Endothelial cell of umbilical vein (primary cell): ENCODE measurements at regions of chr7 and their contacts with region 1.

Region 1: DNA sequence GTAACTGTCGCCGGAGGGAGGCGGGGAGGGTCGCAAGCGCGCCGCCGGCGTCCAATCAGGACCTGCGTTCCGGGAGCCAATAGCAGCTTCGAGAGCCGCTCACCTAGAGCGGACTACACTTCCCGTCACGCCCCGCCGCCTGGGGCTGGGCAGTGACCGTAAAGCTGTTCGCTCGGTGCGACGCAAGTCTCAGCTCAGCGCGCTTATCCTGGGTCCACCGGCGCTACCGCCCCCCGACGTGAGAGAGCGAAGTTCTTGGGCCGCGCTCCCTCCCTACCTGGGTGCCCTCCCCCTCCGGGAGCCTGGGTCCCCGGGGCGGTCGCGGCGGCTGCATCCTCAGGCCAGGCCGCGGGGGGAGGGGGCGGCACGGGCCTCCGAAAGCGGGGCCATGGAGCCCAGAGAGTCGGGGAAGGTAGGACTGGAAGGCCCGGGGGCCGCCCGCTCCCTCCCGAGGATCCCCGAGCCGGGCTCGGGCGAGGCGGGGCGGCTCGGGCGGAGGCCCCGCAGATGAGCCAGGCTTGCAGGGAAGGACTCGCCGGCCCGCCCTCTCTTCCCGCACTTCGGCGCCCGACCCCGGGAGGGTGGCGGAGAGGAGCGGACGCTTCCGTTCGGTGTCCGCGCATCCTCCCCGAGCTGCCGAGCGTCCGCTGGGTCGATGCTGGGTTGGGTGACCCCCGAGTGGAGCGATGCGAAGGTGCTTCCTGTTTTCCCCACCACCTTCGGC is at the start of gene ZNF862:
- DNase-seq: peak; percentile 98
- H3K4me3 ChIP-seq: peak within 1 kb of the TSS; percentile 2 to 83 (median 48)
- H3K27ac ChIP-seq: no peak within 1 kb of the TSS
- H3K4me1 ChIP-seq: no peaks in the 10 kb centered on the region
- H3K27me3 ChIP-seq: no peaks in the 10 kb centered on the region
- CTCF ChIP-seq: no peak
- POLR2A ChIP-seq: peak; percentile 51
- total RNA-seq, gene ZNF862: 7.2 and 14.7 TPM in 2 replicates

Region 2: GRCh38 chr7:148819697-148820360 is 1018.6 kb before region 1 on chr7:
- CTCF ChIA-PET with region 1: no interaction called
- POLR2A ChIA-PET with region 1: no interaction called
- dilution Hi-C with region 1: no loop called
- intact Hi-C with region 1: no loop called
- DNase-seq: peak; percentile 33
- H3K4me3 ChIP-seq: no peak overlapping the region
- H3K27ac ChIP-seq: peak overlapping the region; percentile 22
- H3K4me1 ChIP-seq: peaks cover 29% of the 10 kb centered on the region
- H3K27me3 ChIP-seq: no peaks in the 10 kb centered on the region
- CTCF ChIP-seq: no peak
- POLR2A ChIP-seq: no peak

Region 3: GRCh38 chr7:149714050-149714909 is 124.1 kb before region 1 on chr7:
- CTCF ChIA-PET with region 1: no interaction called
- POLR2A ChIA-PET with region 1: no interaction called
- dilution Hi-C with region 1: no loop called
- intact Hi-C with region 1: loop called (anchors 2 kb)
- DNase-seq: peak; percentile 78
- H3K4me3 ChIP-seq: peak overlapping the region; percentile 38 to 86 (median 51)
- H3K27ac ChIP-seq: no peak overlapping the region
- H3K4me1 ChIP-seq: peaks cover 11% of the 10 kb centered on the region
- H3K27me3 ChIP-seq: peaks cover 0 to 4% of the 10 kb centered on the region in 2 experiments
- CTCF ChIP-seq: no peak
- POLR2A ChIP-seq: no peak

Region 4: GRCh38 chr7:149855361-149856305 is 17.2 kb after region 1 on chr7:
- CTCF ChIA-PET with region 1: interaction called, 9 read pairs
- POLR2A ChIA-PET with region 1: no interaction called
- dilution Hi-C with region 1: no loop called
- intact Hi-C with region 1: loop called (anchors 2 kb)
- DNase-seq: no peak
- H3K4me3 ChIP-seq: no peak overlapping the region
- H3K27ac ChIP-seq: no peak overlapping the region
- H3K4me1 ChIP-seq: no peaks in the 10 kb centered on the region
- H3K27me3 ChIP-seq: no peaks in the 10 kb centered on the region
- CTCF ChIP-seq: no peak
- POLR2A ChIP-seq: no peak

Region 5: DNA sequence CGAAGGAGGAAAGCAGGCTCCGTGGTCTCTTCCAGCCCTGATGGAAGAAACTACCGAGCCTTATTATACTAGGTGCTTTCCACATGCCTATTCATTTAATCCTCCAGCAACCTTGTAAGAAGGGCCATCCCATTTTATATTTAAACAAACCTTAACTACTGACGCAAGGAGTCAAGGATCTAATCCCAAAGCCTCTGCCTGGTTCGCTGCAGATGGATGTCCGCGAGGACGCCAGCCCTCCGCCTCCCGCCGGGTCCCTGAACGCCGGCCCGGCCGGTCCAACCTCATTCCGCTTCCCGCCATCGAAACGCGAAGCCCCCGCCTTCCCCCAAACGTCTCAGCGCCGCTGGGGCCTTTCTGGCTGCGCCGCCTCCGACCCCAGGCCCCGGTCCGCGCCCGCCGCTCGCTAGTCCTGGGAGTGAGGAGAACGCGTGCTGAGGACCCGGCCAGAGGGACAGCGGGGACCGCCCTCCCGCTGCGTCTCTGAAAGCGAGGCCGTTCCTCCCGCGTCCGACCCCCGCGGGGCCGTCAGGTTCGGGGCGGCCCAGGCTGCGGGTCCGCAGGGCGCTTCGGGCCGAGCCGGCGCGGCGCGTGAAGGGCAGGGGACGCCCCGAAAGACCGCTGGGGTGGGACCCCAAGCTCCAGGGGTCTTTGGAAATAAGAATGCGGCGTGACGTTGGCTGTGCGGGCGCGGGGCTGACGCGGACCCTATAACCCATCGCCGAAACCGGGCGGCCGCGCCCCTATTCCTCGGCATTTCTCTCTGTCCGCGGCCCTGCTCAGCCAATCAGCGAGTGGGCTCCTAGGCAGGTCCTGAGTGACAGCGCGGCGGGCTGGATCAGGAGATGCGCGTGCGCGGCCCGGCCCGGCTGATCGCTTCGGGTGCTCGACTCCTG is 34.9 kb after region 1 on chr7 and contains the start of gene ATP6V0E2:
- CTCF ChIA-PET with region 1: interaction called, 5 read pairs
- POLR2A ChIA-PET with region 1: interaction called, 3 read pairs
- dilution Hi-C with region 1: no loop called
- intact Hi-C with region 1: loop called (anchors 1 kb)
- DNase-seq: peak; percentile 94
- H3K4me3 ChIP-seq: peak within 1 kb of the TSS; percentile 48 to 65 (median 65)
- H3K27ac ChIP-seq: peak within 1 kb of the TSS; percentile 68
- H3K4me1 ChIP-seq: peaks cover 13% of the 10 kb centered on the region
- H3K27me3 ChIP-seq: no peaks in the 10 kb centered on the region
- CTCF ChIP-seq: no peak
- POLR2A ChIP-seq: peak; percentile 59
- total RNA-seq, gene ATP6V0E2: 21.5 and 27.8 TPM in 2 replicates